Stomach (tissue), 19 donors: ENCODE measurements at regions of chr19 and their contacts with region 1.

Region 1: DNA sequence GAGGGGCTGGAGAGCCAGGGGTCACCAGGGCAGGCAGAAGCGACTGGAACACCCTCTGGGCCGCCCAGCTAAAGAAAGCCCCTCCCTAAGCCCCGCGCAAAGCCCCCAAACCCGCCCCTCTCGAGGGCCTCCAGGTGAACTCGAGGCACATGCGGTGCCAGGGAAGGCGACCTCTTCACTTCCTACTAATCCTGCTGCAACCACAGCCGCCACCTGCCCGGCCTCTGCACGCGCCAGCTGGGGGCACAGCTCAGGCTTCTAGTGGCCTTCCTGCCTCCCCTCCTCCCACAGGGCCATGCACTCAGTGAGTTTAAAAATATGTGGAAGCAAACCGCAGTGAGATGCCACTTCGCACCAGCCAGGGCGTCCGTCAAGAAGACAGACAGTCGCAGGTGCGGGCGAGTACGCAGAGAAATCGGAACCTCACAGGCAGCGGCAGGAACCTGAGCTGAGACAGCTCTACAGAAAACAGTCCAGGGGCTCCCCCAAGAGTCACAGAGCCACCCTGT is 10.4 kb downstream of the LMNB2 start:
- DNase-seq: peak in 1 of 2 donors; percentile 69
- H3K4me3 ChIP-seq: no peak overlapping the region
- H3K27ac ChIP-seq: no peak overlapping the region
- H3K4me1 ChIP-seq: no peaks in the 10 kb centered on the region
- H3K27me3 ChIP-seq: no peaks in the 10 kb centered on the region
- CTCF ChIP-seq: no peak
- EP300 ChIP-seq: no peak
- POLR2A ChIP-seq: no peak

Region 2: DNA sequence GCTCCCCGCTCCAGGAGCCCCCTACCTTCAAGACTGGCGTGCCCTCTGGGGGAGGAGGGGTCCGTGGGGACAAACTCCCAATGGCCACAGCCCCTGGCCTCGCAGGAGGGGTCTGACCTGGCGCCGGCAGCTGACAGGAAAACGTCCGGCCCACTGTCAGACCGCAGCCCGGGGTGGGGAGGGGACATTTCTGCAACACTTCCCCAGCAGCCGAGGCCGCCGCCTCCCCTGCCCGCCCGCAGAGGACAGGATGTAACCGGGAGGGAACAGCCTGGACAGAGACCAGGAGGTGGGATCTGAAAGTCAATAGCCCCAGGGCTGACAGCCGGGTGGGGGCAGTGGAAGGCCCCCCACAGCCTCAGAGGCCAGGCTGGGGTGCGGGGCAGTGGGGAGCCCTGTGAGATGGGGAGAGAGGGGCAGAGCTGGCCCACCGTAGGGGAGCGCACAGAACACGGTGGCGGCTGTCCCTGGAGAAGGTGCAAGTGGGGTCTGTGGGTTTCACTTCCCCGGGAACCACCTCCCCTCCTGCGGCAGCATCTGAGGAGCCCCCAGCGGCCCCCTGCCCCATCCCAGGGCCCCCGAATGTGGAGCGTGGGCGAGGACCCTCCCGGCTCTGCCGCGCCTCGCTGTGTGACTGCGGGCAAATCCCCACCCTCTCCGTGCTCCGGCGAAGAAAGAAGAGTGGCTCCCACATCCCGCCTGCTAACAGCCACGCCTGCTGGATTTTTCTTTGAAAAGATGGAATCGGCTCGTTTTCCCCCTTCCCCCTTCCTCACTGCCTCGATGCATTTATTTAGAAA is 164.1 kb before region 1 on chr19 and contains the start of gene PEAK3:
- intact Hi-C with region 1: loop called (anchors 10 kb)
- DNase-seq: peak; percentile 67 to 80
- H3K4me3 ChIP-seq: peak within 1 kb of the TSS; percentile 26 to 45 (median 38)
- H3K27ac ChIP-seq: peak within 1 kb of the TSS; percentile 34 to 79 (median 66)
- H3K4me1 ChIP-seq: peaks cover 11 to 41% (median 17%) of the 10 kb centered on the region in 4 donors
- H3K27me3 ChIP-seq: peaks cover 0 to 31% (median 12%) of the 10 kb centered on the region in 3 donors
- CTCF ChIP-seq: no peak
- EP300 ChIP-seq: no peak
- POLR2A ChIP-seq: no peak
- total RNA-seq, gene PEAK3: 0.87 to 1.4 TPM in 2 of 5 donors, not detected in the others